ENCODE measurements at regions of chr5 and their contacts with region 1.

Region 1: DNA sequence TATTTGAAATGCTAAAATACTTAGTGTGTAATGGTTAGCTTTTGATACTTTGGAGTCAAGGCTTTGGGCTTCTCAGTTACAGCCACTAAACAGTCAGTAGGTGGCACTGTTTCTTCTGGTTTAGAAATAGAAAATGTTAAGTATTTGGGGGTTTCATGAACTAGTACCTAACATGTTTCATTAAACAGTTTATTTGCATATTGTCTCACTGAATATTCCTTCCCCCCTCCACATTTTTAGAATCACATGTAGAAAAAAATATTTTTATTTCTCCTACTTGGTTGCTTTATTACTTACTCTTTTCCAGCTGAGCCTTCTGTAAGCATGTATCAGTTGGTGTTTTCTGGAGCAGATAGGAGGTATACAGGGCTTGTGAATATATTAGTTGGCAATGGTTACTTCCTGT is 48.0 kb downstream of the IPO11 start:
- DNase-seq: no peak
- H3K4me3 ChIP-seq: no peak overlapping the region
- H3K27ac ChIP-seq: no peak overlapping the region
- H3K4me1 ChIP-seq: peaks cover 0 to 4% (median 0%) of the 10 kb centered on the region in 4 experiments; a peak in 1 of 7 replicates
- H3K27me3 ChIP-seq: no peaks in the 10 kb centered on the region
- CTCF ChIP-seq: peak in 2 of 3 experiments; percentile 58 to 70; a peak in 2 of 4 replicates
- EP300 ChIP-seq: no peak
- POLR2A ChIP-seq: no peak
- RAD21 ChIP-seq: peak; percentile 78 to 80

Region 2: DNA sequence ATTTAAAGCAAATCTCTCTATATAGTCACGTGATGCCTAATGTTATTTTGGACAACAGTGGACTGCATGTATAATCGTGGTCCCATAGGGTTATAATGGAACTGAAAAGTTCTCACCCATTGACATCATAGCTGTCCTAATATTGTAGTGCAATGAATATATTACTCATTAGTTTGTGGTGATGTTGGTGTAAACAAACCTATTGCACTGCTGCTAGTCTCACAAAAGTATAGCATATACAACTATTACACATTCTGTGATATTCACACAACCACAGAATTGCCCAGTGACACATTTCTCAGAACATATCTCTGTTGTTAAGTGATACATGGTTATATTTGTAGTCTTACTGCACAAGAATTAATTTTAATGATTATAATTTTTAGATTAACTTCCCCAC is 10.3 kb before region 1 on chr5:
- CTCF ChIA-PET with region 1: interaction called, 18 read pairs
- POLR2A ChIA-PET with region 1: interaction called, 3 read pairs
- DNase-seq: no peak
- H3K4me3 ChIP-seq: no peak overlapping the region
- H3K27ac ChIP-seq: no peak overlapping the region
- H3K4me1 ChIP-seq: no peaks in the 10 kb centered on the region
- H3K27me3 ChIP-seq: no peaks in the 10 kb centered on the region
- CTCF ChIP-seq: no peak
- EP300 ChIP-seq: no peak
- POLR2A ChIP-seq: no peak
- RAD21 ChIP-seq: no peak

Region 3: DNA sequence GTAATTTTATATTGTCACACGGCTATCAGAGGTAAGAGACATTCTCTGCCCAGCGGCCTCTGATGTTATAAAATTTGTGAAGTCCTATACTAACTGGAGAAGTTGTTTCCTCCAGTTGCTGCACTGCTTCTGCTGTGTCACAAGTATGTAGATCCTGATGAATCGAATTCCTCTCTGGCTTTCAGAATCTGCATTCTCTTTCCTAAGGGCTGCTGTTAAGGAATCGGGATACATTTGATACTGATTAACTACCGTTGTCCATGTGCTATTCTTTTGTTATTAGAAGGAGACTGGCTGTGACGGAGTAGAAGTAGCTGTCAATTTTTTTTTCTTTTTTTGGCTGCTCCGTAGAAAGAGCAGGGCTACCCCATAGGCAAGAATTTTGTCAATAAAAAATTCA is 36.3 kb after region 1 on chr5:
- CTCF ChIA-PET with region 1: no interaction called
- POLR2A ChIA-PET with region 1: no interaction called
- DNase-seq: no peak
- H3K4me3 ChIP-seq: no peak overlapping the region
- H3K27ac ChIP-seq: no peak overlapping the region
- H3K4me1 ChIP-seq: peaks cover 0 to 6% (median 2%) of the 10 kb centered on the region in 4 experiments; a peak in 2 of 7 replicates
- H3K27me3 ChIP-seq: no peaks in the 10 kb centered on the region
- CTCF ChIP-seq: no peak
- EP300 ChIP-seq: no peak
- POLR2A ChIP-seq: no peak
- RAD21 ChIP-seq: no peak

Measured in H1 (cell line).